CD8-positive, alpha-beta T cell (primary cell): ENCODE measurements at regions of chr14 and their contacts with region 1.

Region 1: GRCh38 chr14:31026395-31027118 is 378 bp upstream of the STRN3 start:
- DNase-seq: peak; percentile 75 to 96 (median 88)
- ATAC-seq: peak; percentile 88
- H3K4me3 ChIP-seq: peak overlapping the region; percentile 77 to 99
- H3K4me3 Mint-ChIP-seq: peak overlapping the region; percentile 97
- H3K27ac ChIP-seq: peak overlapping the region; percentile 79 to 93
- H3K27ac Mint-ChIP-seq: peak overlapping the region; percentile 94
- H3K4me1 ChIP-seq: peaks cover 25% of the 10 kb centered on the region
- H3K4me1 Mint-ChIP-seq: peaks cover 47% of the 10 kb centered on the region
- H3K27me3 ChIP-seq: no peaks in the 10 kb centered on the region
- H3K27me3 Mint-ChIP-seq: no peaks in the 10 kb centered on the region
- CTCF ChIP-seq: no peak

Region 2: GRCh38 chr14:30621940-30622830 is 404.4 kb before region 1 on chr14 and contains the start of gene SCFD1:
- CTCF ChIA-PET with region 1: no interaction called
- POLR2A ChIA-PET with region 1: no interaction called
- intact Hi-C with region 1: loop called (anchors 1 to 10 kb)
- DNase-seq: peak; percentile 79 to 96 (median 92)
- ATAC-seq: peak; percentile 98
- H3K4me3 ChIP-seq: peak within 1 kb of the TSS; percentile 80 to 87
- H3K4me3 Mint-ChIP-seq: peak within 1 kb of the TSS; percentile 94
- H3K27ac ChIP-seq: peak within 1 kb of the TSS; percentile 85 to 88
- H3K27ac Mint-ChIP-seq: peak within 1 kb of the TSS; percentile 96
- H3K4me1 ChIP-seq: peaks cover 30% of the 10 kb centered on the region
- H3K4me1 Mint-ChIP-seq: peaks cover 51% of the 10 kb centered on the region
- H3K27me3 ChIP-seq: no peaks in the 10 kb centered on the region
- H3K27me3 Mint-ChIP-seq: no peaks in the 10 kb centered on the region
- CTCF ChIP-seq: no peak
- total RNA-seq, gene SCFD1: 66.5 to 71.5 TPM

Region 3: DNA sequence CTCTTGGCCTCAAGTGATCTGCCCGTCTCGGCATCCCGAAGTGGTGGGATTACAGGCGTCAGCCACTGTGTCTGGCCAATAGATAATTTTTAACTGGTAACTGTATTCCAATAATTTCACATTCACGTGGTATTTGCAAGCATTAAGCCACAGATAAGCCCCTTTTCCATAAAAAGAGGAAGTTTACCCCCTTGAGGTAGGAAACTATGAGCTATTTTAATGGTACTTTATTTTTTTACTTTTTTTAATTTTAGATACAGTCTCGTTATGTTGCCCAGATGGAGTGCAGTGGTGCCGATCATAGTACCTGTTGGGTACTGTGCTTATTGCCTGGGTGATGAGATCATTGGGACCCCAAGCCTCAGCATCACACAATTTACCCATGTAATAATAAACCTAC is 44.0 kb before region 1 on chr14:
- CTCF ChIA-PET with region 1: interaction called, 4 read pairs
- POLR2A ChIA-PET with region 1: no interaction called
- intact Hi-C with region 1: loop called in 1 of 2 experiments (anchors 2 kb)
- DNase-seq: no peak
- ATAC-seq: no peak
- H3K4me3 ChIP-seq: no peak overlapping the region
- H3K4me3 Mint-ChIP-seq: no peak overlapping the region
- H3K27ac ChIP-seq: no peak overlapping the region
- H3K27ac Mint-ChIP-seq: no peak overlapping the region
- H3K4me1 ChIP-seq: no peaks in the 10 kb centered on the region
- H3K4me1 Mint-ChIP-seq: peaks cover 20% of the 10 kb centered on the region
- H3K27me3 ChIP-seq: no peaks in the 10 kb centered on the region
- H3K27me3 Mint-ChIP-seq: no peaks in the 10 kb centered on the region
- CTCF ChIP-seq: no peak

Region 4: GRCh38 chr14:31084385-31084784 is 57.8 kb after region 1 on chr14:
- CTCF ChIA-PET with region 1: no interaction called
- POLR2A ChIA-PET with region 1: no interaction called
- intact Hi-C with region 1: loop called in 1 of 2 experiments (anchors 2 kb)
- DNase-seq: no peak
- ATAC-seq: no peak
- H3K4me3 ChIP-seq: no peak overlapping the region
- H3K4me3 Mint-ChIP-seq: no peak overlapping the region
- H3K27ac ChIP-seq: no peak overlapping the region
- H3K27ac Mint-ChIP-seq: no peak overlapping the region
- H3K4me1 ChIP-seq: no peaks in the 10 kb centered on the region
- H3K4me1 Mint-ChIP-seq: no peaks in the 10 kb centered on the region
- H3K27me3 ChIP-seq: no peaks in the 10 kb centered on the region
- H3K27me3 Mint-ChIP-seq: no peaks in the 10 kb centered on the region
- CTCF ChIP-seq: no peak

Region 5: GRCh38 chr14:31420319-31421111 is 394.0 kb after region 1 on chr14 and contains the start of gene HEATR5A:
- CTCF ChIA-PET with region 1: no interaction called
- POLR2A ChIA-PET with region 1: interaction called, 7 read pairs
- intact Hi-C with region 1: loop called in 1 of 2 experiments (anchors 1 kb)
- DNase-seq: peak; percentile 87 to 95 (median 93)
- ATAC-seq: peak; percentile 97
- H3K4me3 ChIP-seq: peak within 1 kb of the TSS; percentile 76 to 96
- H3K4me3 Mint-ChIP-seq: peak within 1 kb of the TSS; percentile 97
- H3K27ac ChIP-seq: peak within 1 kb of the TSS; percentile 63 to 71
- H3K27ac Mint-ChIP-seq: peak within 1 kb of the TSS; percentile 91
- H3K4me1 ChIP-seq: peaks cover 13% of the 10 kb centered on the region
- H3K4me1 Mint-ChIP-seq: peaks cover 25% of the 10 kb centered on the region
- H3K27me3 ChIP-seq: no peaks in the 10 kb centered on the region
- H3K27me3 Mint-ChIP-seq: no peaks in the 10 kb centered on the region
- CTCF ChIP-seq: no peak
- total RNA-seq, gene HEATR5A: 3.4 to 3.5 TPM

Region 6: DNA sequence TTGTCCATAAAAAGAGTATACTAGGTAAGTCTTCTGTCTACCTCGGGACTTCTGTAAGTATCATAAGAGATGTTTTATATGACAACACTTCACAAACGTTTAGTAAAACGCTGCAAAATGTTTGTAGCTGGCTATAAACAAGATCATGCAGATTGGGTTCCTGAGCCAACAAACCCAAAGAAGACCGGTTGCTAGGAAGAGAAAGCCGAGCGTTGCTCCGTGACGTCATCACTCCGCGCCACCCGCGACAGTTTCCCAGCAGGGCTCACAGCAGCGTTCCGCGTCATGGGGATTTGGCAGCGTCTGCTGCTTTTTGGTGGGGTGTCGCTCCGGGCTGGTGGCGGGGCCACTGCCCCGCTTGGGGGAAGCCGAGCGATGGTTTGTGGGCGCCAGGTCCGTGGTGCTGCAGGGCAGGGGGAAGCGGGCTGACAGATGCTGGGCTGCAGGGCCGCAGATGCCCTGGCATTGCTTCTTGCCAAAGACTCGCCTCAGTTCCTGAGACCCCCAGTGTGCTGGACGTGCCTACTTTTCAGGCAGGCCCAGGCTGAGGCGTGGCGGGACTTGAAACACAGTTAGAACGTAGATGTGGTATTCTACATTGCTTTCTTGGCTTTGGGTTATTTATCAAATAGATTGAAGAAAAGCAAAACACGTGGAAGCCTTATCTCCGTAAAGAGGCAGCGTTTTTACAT is 534.7 kb after region 1 on chr14 and contains the start of gene NUBPL:
- CTCF ChIA-PET with region 1: no interaction called
- POLR2A ChIA-PET with region 1: no interaction called
- intact Hi-C with region 1: loop called (anchors 2 kb)
- DNase-seq: peak; percentile 95 to 99 (median 98)
- ATAC-seq: peak; percentile 95
- H3K4me3 ChIP-seq: peak within 1 kb of the TSS; percentile 75 to 86
- H3K4me3 Mint-ChIP-seq: peak within 1 kb of the TSS; percentile 96
- H3K27ac ChIP-seq: peak within 1 kb of the TSS; percentile 82 to 86
- H3K27ac Mint-ChIP-seq: peak within 1 kb of the TSS; percentile 98
- H3K4me1 ChIP-seq: peaks cover 18% of the 10 kb centered on the region
- H3K4me1 Mint-ChIP-seq: peaks cover 35% of the 10 kb centered on the region
- H3K27me3 ChIP-seq: no peaks in the 10 kb centered on the region
- H3K27me3 Mint-ChIP-seq: peaks cover 4% of the 10 kb centered on the region
- CTCF ChIP-seq: no peak
- total RNA-seq, gene NUBPL: 4.7 to 7.5 TPM